ENCODE measurements at regions of chr11 and their contacts with region 1.

Region 1: GRCh38 chr11:118227865-118228785 is 3.3 kb upstream of the JAML start:
- DNase-seq: no peak
- ATAC-seq: no peak
- H3K4me3 Mint-ChIP-seq: peak overlapping the region; percentile 15
- H3K27ac Mint-ChIP-seq: no peak overlapping the region
- H3K4me1 Mint-ChIP-seq: peaks cover 49% of the 10 kb centered on the region
- H3K27me3 Mint-ChIP-seq: no peaks in the 10 kb centered on the region

Region 2: GRCh38 chr11:117098269-117099232 is 1129.6 kb before region 1 on chr11 and contains the start of gene SIK3:
- CTCF ChIA-PET with region 1: no interaction called
- POLR2A ChIA-PET with region 1: no interaction called
- intact Hi-C with region 1: loop called in 1 of 2 experiments (anchors 5 kb)
- DNase-seq: peak; percentile 96
- ATAC-seq: peak; percentile 71
- H3K4me3 Mint-ChIP-seq: peak within 1 kb of the TSS; percentile 93
- H3K27ac Mint-ChIP-seq: peak within 1 kb of the TSS; percentile 93
- H3K4me1 Mint-ChIP-seq: peaks cover 46% of the 10 kb centered on the region
- H3K27me3 Mint-ChIP-seq: no peaks in the 10 kb centered on the region
- total RNA-seq, gene SIK3: 23.6 to 25.3 TPM

Region 3: GRCh38 chr11:118211006-118211405 is 17.1 kb before region 1 on chr11:
- CTCF ChIA-PET with region 1: interaction called, 36 read pairs
- POLR2A ChIA-PET with region 1: interaction called, 44 read pairs
- intact Hi-C with region 1: loop called (anchors 2 kb)
- DNase-seq: no peak
- ATAC-seq: no peak
- H3K4me3 Mint-ChIP-seq: no peak overlapping the region
- H3K27ac Mint-ChIP-seq: peak overlapping the region; percentile 59
- H3K4me1 Mint-ChIP-seq: peaks cover 79% of the 10 kb centered on the region
- H3K27me3 Mint-ChIP-seq: no peaks in the 10 kb centered on the region

Region 4: GRCh38 chr11:118216621-118217481 is 11.3 kb before region 1 on chr11:
- CTCF ChIA-PET with region 1: interaction called, 36 read pairs
- POLR2A ChIA-PET with region 1: interaction called, 44 read pairs
- intact Hi-C with region 1: loop called (anchors 1 kb)
- DNase-seq: peak; percentile 76
- ATAC-seq: peak; percentile 73
- H3K4me3 Mint-ChIP-seq: peak overlapping the region; percentile 76
- H3K27ac Mint-ChIP-seq: peak overlapping the region; percentile 100
- H3K4me1 Mint-ChIP-seq: peaks cover 97% of the 10 kb centered on the region
- H3K27me3 Mint-ChIP-seq: no peaks in the 10 kb centered on the region

Region 5: GRCh38 chr11:118251858-118252652 is 23.9 kb after region 1 on chr11 and contains the start of gene MPZL3:
- CTCF ChIA-PET with region 1: interaction called, 11 read pairs
- POLR2A ChIA-PET with region 1: interaction called, 7 read pairs
- intact Hi-C with region 1: loop called in 1 of 2 experiments (anchors 1 kb)
- DNase-seq: peak; percentile 90
- ATAC-seq: peak; percentile 65
- H3K4me3 Mint-ChIP-seq: peak within 1 kb of the TSS; percentile 82
- H3K27ac Mint-ChIP-seq: peak within 1 kb of the TSS; percentile 96
- H3K4me1 Mint-ChIP-seq: peaks cover 36% of the 10 kb centered on the region
- H3K27me3 Mint-ChIP-seq: no peaks in the 10 kb centered on the region
- total RNA-seq, gene MPZL3: 45.9 to 53.2 TPM

Region 6: DNA sequence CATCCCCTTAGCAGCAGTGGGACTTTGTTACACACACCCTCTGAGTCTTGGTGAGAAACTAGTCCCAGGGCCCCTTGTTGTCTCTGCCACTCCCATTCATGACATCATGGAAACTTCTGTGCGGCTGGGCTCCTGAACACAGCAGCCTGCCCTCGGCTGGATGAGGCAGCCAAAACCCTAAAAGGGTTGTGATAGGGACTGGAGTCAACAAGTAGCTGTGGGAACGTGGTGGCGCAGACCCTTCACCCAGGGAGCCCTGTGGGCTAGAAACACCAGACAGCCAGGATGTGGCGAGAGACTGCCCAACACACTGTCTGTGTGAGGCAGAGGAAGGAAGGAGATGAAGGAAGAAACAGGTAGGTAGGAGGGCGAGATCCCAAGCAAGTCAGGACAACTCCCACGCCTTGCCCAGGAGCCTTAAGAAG is 110.5 kb after region 1 on chr11:
- CTCF ChIA-PET with region 1: no interaction called
- POLR2A ChIA-PET with region 1: interaction called, 6 read pairs
- intact Hi-C with region 1: loop called in 1 of 2 experiments (anchors 2 kb)
- DNase-seq: peak; percentile 94
- ATAC-seq: peak; percentile 63
- H3K4me3 Mint-ChIP-seq: peak overlapping the region; percentile 83
- H3K27ac Mint-ChIP-seq: peak overlapping the region; percentile 100
- H3K4me1 Mint-ChIP-seq: peaks cover 45% of the 10 kb centered on the region
- H3K27me3 Mint-ChIP-seq: no peaks in the 10 kb centered on the region

Region 7: DNA sequence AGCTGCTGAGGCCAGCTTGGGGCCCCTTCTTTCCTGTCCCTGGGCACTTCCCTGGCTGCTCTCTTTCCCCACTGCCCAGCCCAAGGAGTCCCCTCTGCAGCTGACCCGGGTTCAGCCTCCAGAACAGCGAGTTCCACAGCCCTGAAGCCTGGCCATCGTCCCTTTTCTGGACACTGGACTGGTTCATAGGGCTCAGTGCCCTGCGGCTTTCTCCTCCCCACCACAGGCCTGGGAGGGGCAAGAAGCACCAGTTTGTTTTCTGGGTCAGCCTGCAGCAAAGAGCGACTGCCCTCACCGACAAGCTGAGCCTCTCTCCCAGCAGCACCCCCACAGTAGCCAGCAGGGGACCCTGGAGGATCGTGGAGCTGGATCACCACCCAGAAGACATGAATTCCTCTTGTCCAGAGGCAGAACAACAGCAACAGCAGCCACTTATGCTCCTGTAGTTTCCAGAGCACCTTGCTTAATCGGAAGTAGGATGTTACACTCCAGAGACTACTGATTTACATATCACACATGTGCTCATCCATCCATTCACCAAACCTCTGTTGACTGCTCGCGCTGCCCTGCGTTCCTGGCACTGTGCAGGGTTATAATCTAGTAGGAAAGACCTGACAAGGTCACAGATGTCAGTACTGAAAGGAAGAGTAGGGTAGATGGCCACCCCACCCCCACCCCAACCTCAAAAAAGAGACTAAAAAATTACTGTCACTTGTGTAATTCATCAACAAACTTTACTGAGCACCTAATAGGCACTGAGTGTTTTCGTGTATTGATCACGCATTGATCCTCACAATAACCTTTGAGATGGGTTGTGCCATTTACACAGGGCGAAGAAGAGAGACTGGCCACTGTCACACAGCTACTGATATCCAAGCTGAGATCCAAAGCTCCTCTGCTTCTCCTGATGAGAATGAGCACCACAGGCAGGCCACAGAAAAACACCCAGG is 642.5 kb after region 1 on chr11:
- CTCF ChIA-PET with region 1: no interaction called
- POLR2A ChIA-PET with region 1: no interaction called
- intact Hi-C with region 1: loop called in 1 of 2 experiments (anchors 10 kb)
- DNase-seq: peak; percentile 61
- ATAC-seq: peak; percentile 70
- H3K4me3 Mint-ChIP-seq: peak overlapping the region; percentile 71
- H3K27ac Mint-ChIP-seq: peak overlapping the region; percentile 99
- H3K4me1 Mint-ChIP-seq: peaks cover 57% of the 10 kb centered on the region
- H3K27me3 Mint-ChIP-seq: no peaks in the 10 kb centered on the region

Measured in activated CD4-positive, alpha-beta T cell treated with anti-CD3 and anti-CD28 coated beads for 36 hours (primary cell).